Endothelial cell of umbilical vein (primary cell): ENCODE measurements at regions of chr3 and their contacts with region 1.

Region 1: DNA sequence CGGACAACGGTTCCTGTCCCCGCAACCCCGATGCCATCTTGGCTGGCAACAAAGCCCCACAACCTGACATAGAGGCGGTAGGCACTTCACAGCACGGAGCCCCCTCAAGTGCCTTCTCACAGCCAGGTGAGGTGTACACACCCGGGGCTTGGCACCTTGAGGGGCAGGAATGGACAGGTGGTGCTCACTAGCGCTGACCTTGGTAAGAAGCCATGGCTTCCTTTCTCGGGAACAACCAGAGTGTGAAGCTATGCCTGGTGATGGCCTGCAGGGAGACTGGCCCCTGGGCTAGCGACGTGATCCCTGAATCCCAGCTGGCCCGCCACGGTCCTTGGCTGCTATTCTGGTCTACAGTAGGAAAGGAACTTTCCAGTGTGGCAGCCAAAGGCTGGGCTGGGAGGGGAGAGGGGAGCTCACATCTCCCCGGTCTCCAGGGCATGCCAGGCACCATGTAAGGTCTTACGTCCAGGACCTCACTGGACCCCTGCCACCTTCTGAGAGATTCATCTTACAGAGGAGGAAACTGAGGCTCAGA is 70.6 kb upstream of the RPL32 start:
- DNase-seq: no peak
- H3K4me3 ChIP-seq: no peak overlapping the region
- H3K27ac ChIP-seq: no peak overlapping the region
- H3K4me1 ChIP-seq: no peaks in the 10 kb centered on the region
- H3K27me3 ChIP-seq: no peaks in the 10 kb centered on the region
- CTCF ChIP-seq: no peak
- POLR2A ChIP-seq: no peak

Region 2: DNA sequence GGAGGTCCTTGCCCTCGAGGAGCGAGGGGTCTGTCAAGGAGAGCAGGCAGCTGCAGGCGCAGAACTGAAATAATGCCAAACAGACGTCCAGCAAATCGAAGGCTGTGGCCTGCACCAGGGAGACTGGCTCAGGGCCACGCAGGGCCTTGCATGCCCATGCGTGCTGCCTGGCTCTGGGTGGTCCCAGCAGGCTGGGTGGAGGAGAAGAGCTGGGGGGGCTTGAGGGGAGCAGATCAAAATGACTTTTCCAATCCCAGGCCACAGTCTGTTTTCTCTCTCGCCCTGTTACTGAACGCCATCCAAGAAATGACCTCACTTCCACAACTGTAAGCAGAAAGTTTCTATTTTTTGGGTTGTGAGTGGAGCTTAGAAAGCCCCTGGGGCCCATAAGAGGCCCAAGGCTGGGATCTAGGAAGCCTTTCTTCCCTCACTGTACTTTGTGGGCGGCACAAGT is 26.3 kb after region 1 on chr3:
- CTCF ChIA-PET with region 1: no interaction called
- POLR2A ChIA-PET with region 1: interaction called, 11 read pairs
- dilution Hi-C with region 1: no loop called
- intact Hi-C with region 1: no loop called
- DNase-seq: no peak
- H3K4me3 ChIP-seq: no peak overlapping the region
- H3K27ac ChIP-seq: no peak overlapping the region
- H3K4me1 ChIP-seq: no peaks in the 10 kb centered on the region
- H3K27me3 ChIP-seq: no peaks in the 10 kb centered on the region
- CTCF ChIP-seq: no peak
- POLR2A ChIP-seq: no peak

Region 3: DNA sequence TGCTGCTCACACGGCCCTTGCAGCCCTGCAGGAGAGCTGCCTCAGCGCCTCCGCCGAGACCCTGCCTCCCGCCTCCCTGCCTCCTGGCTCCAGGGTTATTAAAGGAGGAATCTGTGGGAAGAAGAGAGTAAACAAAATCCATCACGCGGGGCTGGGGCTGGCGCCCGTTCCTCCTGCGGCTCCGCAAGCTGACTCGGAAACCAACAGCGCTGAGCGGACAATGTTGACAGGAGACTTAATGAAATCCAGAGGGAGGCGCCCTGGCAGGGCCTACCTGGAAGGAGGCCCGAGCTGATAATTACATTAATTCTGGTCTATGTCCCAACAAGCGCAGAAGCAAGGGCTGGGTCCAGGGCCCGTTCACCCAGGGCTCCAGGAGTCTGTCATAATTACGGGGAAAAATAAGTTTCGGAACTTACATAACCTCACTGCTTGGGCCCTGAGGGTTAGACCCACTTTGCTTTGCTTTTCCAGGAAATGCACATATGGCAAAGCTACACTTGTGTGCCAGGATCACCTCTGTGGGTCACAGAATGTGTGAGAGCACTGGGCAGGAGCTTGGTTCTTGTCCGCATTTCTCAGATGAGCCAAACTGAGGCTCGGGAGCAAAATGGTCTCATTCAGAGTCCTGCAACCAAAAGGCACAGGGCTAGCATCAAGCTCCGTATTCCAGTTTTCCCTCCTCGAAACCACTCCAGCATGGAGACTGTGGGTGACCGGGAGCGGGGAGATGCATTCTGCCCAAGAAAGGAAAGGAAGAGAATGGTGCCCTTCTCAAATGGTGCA is 1446.7 kb after region 1 on chr3:
- CTCF ChIA-PET with region 1: no interaction called
- POLR2A ChIA-PET with region 1: no interaction called
- dilution Hi-C with region 1: no loop called
- intact Hi-C with region 1: no loop called
- DNase-seq: no peak
- H3K4me3 ChIP-seq: no peak overlapping the region
- H3K27ac ChIP-seq: no peak overlapping the region
- H3K4me1 ChIP-seq: no peaks in the 10 kb centered on the region
- H3K27me3 ChIP-seq: peaks cover 0 to 3% of the 10 kb centered on the region in 2 experiments
- CTCF ChIP-seq: no peak
- POLR2A ChIP-seq: no peak